ENCODE measurements at regions of chr16 and their contacts with region 1.

Region 1: GRCh38 chr16:84952335-84953189 is 58.8 kb downstream of the ZDHHC7 start:
- DNase-seq: peak; percentile 87
- H3K4me3 ChIP-seq: no peak overlapping the region
- H3K27ac ChIP-seq: no peak overlapping the region
- H3K4me1 ChIP-seq: no peaks in the 10 kb centered on the region
- H3K27me3 ChIP-seq: peaks cover 0 to 2% of the 10 kb centered on the region in 2 experiments
- CTCF ChIP-seq: peak; percentile 88 to 90
- POLR2A ChIP-seq: no peak

Region 2: DNA sequence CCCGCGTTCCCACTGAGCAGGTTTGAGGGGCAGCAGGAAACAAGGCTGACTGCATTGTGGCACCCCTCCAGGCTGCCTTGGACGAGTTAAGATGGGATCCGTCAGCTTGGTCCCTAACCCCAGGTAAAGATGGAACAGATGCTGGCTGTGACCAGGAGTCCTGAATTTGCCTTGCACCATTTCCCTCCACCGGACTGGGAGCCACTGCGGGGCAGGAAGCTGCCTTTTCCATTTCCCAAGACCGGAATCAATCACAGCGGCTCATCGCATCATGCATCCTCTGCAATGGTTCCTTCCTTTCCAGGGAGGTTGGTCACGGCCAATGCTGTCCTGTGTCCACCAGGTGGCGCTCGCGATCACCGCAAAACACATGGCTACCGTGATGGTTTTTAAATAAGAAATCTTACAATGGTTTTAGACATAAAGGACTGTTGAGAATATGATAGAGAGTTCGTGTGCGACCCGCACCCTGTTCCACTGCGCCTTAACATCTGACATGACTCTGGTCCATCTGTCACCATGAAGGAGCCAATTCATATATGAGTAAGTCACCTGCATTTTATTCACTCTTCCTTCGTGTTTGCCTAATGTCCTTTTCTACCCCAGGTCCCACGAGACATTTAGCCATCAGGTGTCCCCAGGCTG is 441.3 kb before region 1 on chr16:
- CTCF ChIA-PET with region 1: interaction called, 3 read pairs
- POLR2A ChIA-PET with region 1: no interaction called
- dilution Hi-C with region 1: no loop called
- intact Hi-C with region 1: loop called (anchors 10 kb)
- DNase-seq: peak; percentile 87
- H3K4me3 ChIP-seq: no peak overlapping the region
- H3K27ac ChIP-seq: no peak overlapping the region
- H3K4me1 ChIP-seq: peaks cover 3% of the 10 kb centered on the region
- H3K27me3 ChIP-seq: no peaks in the 10 kb centered on the region
- CTCF ChIP-seq: peak; percentile 86 to 92
- POLR2A ChIP-seq: no peak

Region 3: GRCh38 chr16:84746882-84747281 is 205.7 kb before region 1 on chr16:
- CTCF ChIA-PET with region 1: interaction called, 292 read pairs
- POLR2A ChIA-PET with region 1: interaction called, 4 read pairs
- dilution Hi-C with region 1: loop called (anchors 25 kb)
- intact Hi-C with region 1: no loop called
- DNase-seq: no peak
- H3K4me3 ChIP-seq: no peak overlapping the region
- H3K27ac ChIP-seq: no peak overlapping the region
- H3K4me1 ChIP-seq: peaks cover 4% of the 10 kb centered on the region
- H3K27me3 ChIP-seq: no peaks in the 10 kb centered on the region
- CTCF ChIP-seq: peak in 1 of 2 donors; percentile 8
- POLR2A ChIP-seq: no peak

Region 4: GRCh38 chr16:84848986-84849634 is 103.5 kb before region 1 on chr16:
- CTCF ChIA-PET with region 1: no interaction called
- POLR2A ChIA-PET with region 1: no interaction called
- dilution Hi-C with region 1: no loop called
- intact Hi-C with region 1: no loop called
- DNase-seq: no peak
- H3K4me3 ChIP-seq: no peak overlapping the region
- H3K27ac ChIP-seq: no peak overlapping the region
- H3K4me1 ChIP-seq: no peaks in the 10 kb centered on the region
- H3K27me3 ChIP-seq: peaks cover 0 to 2% of the 10 kb centered on the region in 2 experiments
- CTCF ChIP-seq: no peak
- POLR2A ChIP-seq: no peak

Region 5: DNA sequence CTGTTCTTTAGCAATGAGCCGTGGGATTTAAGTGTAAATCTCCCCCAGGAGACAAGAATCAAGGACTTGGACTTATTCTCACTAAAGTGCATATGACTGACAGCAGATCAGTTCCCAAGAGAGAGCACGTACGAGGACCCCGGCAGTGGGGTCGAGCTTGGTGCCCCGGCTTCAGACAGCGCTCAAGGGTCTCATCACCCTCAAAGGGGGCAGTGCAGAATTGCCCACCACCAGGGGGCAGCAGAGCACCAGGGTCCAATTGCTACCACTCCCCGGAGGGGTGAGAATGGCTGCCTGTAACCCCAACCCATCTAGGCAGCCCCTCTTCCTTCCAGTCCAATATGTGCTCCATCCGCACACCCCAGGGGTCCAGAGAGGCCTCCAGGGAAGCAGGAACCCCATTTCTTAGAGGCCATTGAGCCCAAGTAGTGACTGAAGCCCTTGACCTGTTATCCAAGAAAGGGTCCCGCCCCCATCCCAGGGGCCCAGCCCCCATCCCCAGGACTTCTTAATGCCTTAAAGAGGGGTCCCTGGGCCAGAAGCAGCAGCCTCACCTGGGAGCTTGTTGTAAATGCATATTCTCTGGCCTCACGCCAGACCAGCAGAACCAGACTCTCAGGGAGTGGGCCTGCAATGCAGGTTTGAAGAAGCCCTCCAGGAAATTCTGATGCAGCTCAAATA is 27.3 kb before region 1 on chr16:
- CTCF ChIA-PET with region 1: interaction called, 57 read pairs
- POLR2A ChIA-PET with region 1: no interaction called
- dilution Hi-C with region 1: no loop called
- intact Hi-C with region 1: loop called (anchors 1 kb)
- DNase-seq: peak; percentile 23
- H3K4me3 ChIP-seq: no peak overlapping the region
- H3K27ac ChIP-seq: no peak overlapping the region
- H3K4me1 ChIP-seq: no peaks in the 10 kb centered on the region
- H3K27me3 ChIP-seq: no peaks in the 10 kb centered on the region
- CTCF ChIP-seq: peak; percentile 65 to 87
- POLR2A ChIP-seq: no peak

Region 6: DNA sequence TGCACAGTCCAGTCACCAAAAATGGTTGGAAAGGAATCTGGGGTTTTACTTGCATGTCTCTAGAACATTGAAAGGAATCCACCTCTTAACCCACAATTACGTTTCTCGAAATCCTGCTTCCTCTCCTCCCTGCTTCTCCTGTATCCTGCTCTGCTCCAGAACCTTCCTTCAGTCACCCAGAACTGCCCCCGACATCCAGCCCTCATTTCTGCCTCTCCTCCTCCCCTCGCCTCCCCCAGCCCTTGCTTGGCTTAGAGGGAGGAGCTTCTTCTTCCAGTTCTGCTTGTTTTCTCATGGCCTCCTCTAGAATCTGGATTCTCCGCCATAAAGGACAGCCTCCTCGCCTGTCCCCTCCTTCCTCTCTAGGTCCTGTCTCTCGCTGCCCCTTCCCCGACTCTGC is 10.5 kb after region 1 on chr16:
- CTCF ChIA-PET with region 1: interaction called, 28 read pairs
- POLR2A ChIA-PET with region 1: no interaction called
- dilution Hi-C with region 1: no loop called
- intact Hi-C with region 1: no loop called
- DNase-seq: no peak
- H3K4me3 ChIP-seq: no peak overlapping the region
- H3K27ac ChIP-seq: no peak overlapping the region
- H3K4me1 ChIP-seq: no peaks in the 10 kb centered on the region
- H3K27me3 ChIP-seq: peaks cover 0 to 1% of the 10 kb centered on the region in 2 experiments
- CTCF ChIP-seq: no peak
- POLR2A ChIP-seq: no peak

Measured in endothelial cell of umbilical vein (primary cell).